Activated naive CD4-positive, alpha-beta T cell treated with anti-CD3 and anti-CD28 coated beads, Interleukin-2, amount 10 ng/mL, durations not matched to agents 7 days and 5 days (primary cell): ENCODE measurements at regions of chr20 and their contacts with region 1.

Region 1: GRCh38 chr20:1108437-1108920 is 9.9 kb upstream of the PSMF1 start:
- DNase-seq: peak; percentile 66
- H3K4me3 Mint-ChIP-seq: no peak overlapping the region
- H3K27ac Mint-ChIP-seq: no peak overlapping the region
- H3K4me1 Mint-ChIP-seq: peaks cover 3% of the 10 kb centered on the region
- H3K27me3 Mint-ChIP-seq: peaks cover 20% of the 10 kb centered on the region

Region 2: GRCh38 chr20:944774-945410 is 163.6 kb before region 1 on chr20:
- CTCF ChIA-PET with region 1: no interaction called
- DNase-seq: no peak
- H3K4me3 Mint-ChIP-seq: no peak overlapping the region
- H3K27ac Mint-ChIP-seq: no peak overlapping the region
- H3K4me1 Mint-ChIP-seq: no peaks in the 10 kb centered on the region
- H3K27me3 Mint-ChIP-seq: peaks cover 54% of the 10 kb centered on the region

Region 3: GRCh38 chr20:1185790-1186334 is 77.4 kb after region 1 on chr20:
- CTCF ChIA-PET with region 1: interaction called, 14 read pairs
- DNase-seq: peak; percentile 70
- H3K4me3 Mint-ChIP-seq: peak overlapping the region; percentile 58
- H3K27ac Mint-ChIP-seq: no peak overlapping the region
- H3K4me1 Mint-ChIP-seq: peaks cover 11% of the 10 kb centered on the region
- H3K27me3 Mint-ChIP-seq: peaks cover 48% of the 10 kb centered on the region

Region 4: GRCh38 chr20:1212607-1213396 is 104.3 kb after region 1 on chr20:
- CTCF ChIA-PET with region 1: interaction called, 17 read pairs
- DNase-seq: peak; percentile 80
- H3K4me3 Mint-ChIP-seq: no peak overlapping the region
- H3K27ac Mint-ChIP-seq: no peak overlapping the region
- H3K4me1 Mint-ChIP-seq: peaks cover 46% of the 10 kb centered on the region
- H3K27me3 Mint-ChIP-seq: peaks cover 21% of the 10 kb centered on the region